Sciatic nerve (tissue), 2 donors: ENCODE measurements at regions of chr4 and their contacts with region 1.

Region 1: GRCh38 chr4:127284236-127284635 is 348.5 kb upstream of the INTU start:
- DNase-seq: no peak
- ATAC-seq: no peak

Region 2: DNA sequence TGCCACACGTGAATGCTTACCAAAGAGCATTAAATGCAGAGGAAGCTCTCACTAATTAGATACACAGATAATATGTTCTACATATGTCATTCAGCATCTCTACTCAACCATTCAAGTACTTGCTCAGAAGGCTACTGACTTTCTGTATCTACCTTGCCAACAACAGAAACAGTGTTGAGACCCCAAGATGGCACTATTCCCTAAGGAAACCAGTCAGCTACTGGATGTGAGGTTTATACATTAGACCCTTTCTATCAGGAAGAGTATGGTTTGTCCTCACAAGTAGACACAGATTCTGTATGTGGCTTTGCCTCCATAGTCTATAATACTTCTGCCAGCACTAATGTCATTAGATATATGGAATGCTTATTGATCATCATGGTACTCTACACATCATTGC is 95.4 kb before region 1 on chr4:
- intact Hi-C with region 1: no loop called
- DNase-seq: no peak
- ATAC-seq: peak; percentile 45

Region 3: DNA sequence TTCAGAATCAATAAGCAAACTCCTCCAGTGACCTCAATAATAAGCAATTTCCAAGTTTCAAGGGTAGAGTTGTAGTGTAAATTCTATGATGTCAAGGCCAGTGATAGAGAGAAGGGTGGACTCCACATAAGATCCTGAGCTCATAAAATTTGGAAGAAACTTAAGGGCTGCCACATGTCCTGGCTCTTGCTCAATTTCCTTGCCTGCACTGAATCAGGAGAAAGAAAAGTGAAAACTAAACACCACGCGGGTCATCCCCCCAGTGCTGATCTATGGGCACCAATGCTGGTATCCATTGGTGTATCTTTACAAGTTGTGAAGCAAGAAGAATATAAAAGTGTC is 43.5 kb before region 1 on chr4:
- intact Hi-C with region 1: no loop called
- DNase-seq: no peak
- ATAC-seq: no peak

Region 4: GRCh38 chr4:127309369-127310102 is 25.3 kb after region 1 on chr4:
- intact Hi-C with region 1: loop called (anchors 1 kb)
- DNase-seq: no peak
- ATAC-seq: peak; percentile 82